ENCODE measurements at regions of chr10 and their contacts with region 1.

Region 1: DNA sequence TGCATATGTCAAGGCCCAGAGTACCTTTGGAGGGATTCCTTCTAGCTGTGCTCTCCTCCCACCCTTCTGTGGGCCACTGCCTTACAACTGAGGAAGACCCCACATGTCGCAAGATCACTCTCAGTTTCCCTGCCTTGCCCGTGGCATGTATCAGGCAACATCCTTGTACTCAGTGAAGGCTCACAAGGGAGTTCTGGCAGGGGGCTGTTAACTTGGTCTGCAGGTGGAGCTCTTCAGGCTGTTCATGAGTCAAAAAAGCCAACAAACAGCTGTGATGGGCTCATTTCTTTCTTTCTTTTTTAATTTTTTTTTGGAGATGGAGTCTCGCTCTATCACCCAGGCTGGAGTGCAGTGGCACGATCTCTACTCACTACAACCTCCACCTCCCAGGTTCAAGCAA is 513.0 kb upstream of the ANKRD30A start:
- DNase-seq: no peak
- ATAC-seq: no peak
- H3K4me3 ChIP-seq: no peak overlapping the region
- H3K27ac ChIP-seq: no peak overlapping the region
- H3K4me1 ChIP-seq: no peaks in the 10 kb centered on the region
- H3K27me3 ChIP-seq: no peaks in the 10 kb centered on the region
- CTCF ChIP-seq: no peak

Region 2: GRCh38 chr10:36771725-36772124 is 159.3 kb after region 1 on chr10:
- CTCF ChIA-PET with region 1: no interaction called
- POLR2A ChIA-PET with region 1: interaction called, 11 read pairs
- in situ Hi-C with region 1: no loop called
- intact Hi-C with region 1: no loop called
- DNase-seq: no peak
- ATAC-seq: no peak
- H3K4me3 ChIP-seq: no peak overlapping the region
- H3K27ac ChIP-seq: no peak overlapping the region
- H3K4me1 ChIP-seq: no peaks in the 10 kb centered on the region
- H3K27me3 ChIP-seq: no peaks in the 10 kb centered on the region
- CTCF ChIP-seq: no peak